CD8-positive, alpha-beta T cell (primary cell): ENCODE measurements at regions of chr1 and their contacts with region 1.

Region 1: DNA sequence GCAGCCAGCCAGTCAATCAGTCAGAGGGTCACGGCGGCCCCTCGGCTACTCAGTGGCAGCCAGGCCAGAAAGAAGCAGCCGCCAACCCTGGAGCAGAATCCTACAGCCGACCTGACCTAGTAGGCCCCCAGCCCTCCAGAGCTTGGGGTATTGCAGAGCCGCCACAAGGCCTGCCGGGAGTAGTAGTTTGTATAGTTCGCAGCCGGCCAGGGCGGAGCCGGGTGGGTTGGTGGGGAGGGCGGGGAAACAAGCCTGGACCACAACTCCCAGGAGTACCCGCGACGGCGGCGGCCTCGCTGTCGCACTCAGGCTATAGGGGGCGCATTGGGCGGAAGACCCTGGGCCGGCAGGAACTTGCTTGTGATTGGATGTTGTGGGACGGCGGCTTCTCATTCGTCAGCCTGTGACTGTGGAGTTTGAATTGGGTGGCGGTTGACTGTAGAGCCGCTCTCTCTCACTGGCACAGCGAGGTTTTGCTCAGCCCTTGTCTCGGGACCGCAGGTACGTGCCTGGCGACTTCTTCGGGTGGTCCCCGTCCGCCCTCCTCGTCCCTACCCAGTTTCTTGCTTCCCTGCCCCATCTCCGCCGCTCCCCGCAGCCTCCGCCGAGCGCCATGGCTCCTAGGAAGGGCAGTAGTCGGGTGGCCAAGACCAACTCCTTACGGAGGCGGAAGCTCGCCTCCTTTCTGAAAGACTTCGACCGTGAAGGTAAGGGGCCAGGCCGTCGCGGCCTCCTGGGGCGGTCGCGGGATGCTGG is at the start of gene CDCA8:
- DNase-seq: peak; percentile 97 to 99 (median 99)
- ATAC-seq: peak; percentile 88
- H3K4me3 ChIP-seq: peak within 1 kb of the TSS; percentile 73 to 90
- H3K4me3 Mint-ChIP-seq: peak within 1 kb of the TSS; percentile 88
- H3K27ac ChIP-seq: peak within 1 kb of the TSS; percentile 54 to 57
- H3K27ac Mint-ChIP-seq: peak within 1 kb of the TSS; percentile 90
- H3K4me1 ChIP-seq: peaks cover 28% of the 10 kb centered on the region
- H3K4me1 Mint-ChIP-seq: peaks cover 39% of the 10 kb centered on the region
- H3K27me3 ChIP-seq: no peaks in the 10 kb centered on the region
- H3K27me3 Mint-ChIP-seq: no peaks in the 10 kb centered on the region
- CTCF ChIP-seq: peak; percentile 42
- total RNA-seq, gene CDCA8: 0.25 to 0.62 TPM

Region 2: DNA sequence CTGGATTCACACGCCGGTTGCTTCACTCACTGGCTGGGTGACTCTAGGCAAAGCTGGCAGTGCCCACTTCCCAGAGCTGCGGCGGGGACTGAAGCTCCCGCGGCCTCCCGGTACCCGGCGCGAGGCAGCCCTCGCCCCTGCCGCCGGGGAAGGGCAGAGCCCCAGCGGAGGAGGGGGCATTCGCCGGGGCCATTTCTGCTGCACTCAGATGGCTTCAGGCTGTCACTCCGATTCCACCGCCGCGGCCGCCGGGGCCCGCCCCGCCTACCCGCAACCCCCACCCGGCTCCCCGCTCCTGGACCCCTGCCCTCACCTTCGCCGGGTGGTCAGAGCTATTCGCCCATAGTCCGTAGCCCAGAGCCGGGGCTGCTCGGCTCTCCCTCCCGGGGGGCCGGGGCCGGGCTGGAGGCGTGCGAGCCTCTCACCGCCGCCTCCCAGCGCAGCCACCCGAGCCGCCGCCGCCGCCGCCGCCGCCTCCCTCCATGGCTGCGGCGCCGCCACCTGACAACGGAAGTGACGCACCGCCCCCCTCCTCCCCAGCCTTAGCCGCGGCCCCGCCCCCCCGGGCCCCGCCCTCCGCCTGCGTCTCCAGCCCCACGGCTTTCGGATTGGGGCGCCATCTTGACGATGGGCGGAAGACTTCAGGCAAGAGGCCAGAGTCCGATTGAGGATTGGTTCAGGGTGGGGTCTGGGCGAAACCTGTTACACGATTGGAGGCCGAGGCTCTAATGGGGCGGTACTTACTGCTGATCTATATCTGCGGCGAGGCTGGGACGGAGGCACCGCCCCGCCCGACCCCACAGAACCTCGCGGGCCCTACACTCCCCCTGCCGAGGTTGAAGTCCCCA is 1306.6 kb before region 1 on chr1 and contains the start of gene STK40:
- CTCF ChIA-PET with region 1: no interaction called
- POLR2A ChIA-PET with region 1: no interaction called
- intact Hi-C with region 1: loop called in 1 of 2 experiments (anchors 5 kb)
- DNase-seq: peak; percentile 97 to 99 (median 98)
- ATAC-seq: peak; percentile 85
- H3K4me3 ChIP-seq: peak within 1 kb of the TSS; percentile 87 to 89
- H3K4me3 Mint-ChIP-seq: peak within 1 kb of the TSS; percentile 88
- H3K27ac ChIP-seq: peak within 1 kb of the TSS; percentile 78 to 92
- H3K27ac Mint-ChIP-seq: peak within 1 kb of the TSS; percentile 98
- H3K4me1 ChIP-seq: peaks cover 27% of the 10 kb centered on the region
- H3K4me1 Mint-ChIP-seq: peaks cover 46% of the 10 kb centered on the region
- H3K27me3 ChIP-seq: no peaks in the 10 kb centered on the region
- H3K27me3 Mint-ChIP-seq: no peaks in the 10 kb centered on the region
- CTCF ChIP-seq: no peak
- total RNA-seq, gene STK40: 13.4 to 16.9 TPM

Region 3: GRCh38 chr1:37514350-37515184 is 177.7 kb before region 1 on chr1 and contains the start of gene MEAF6:
- CTCF ChIA-PET with region 1: no interaction called
- POLR2A ChIA-PET with region 1: interaction called, 14 read pairs
- intact Hi-C with region 1: loop called in 1 of 2 experiments (anchors 1 kb)
- DNase-seq: peak; percentile 68 to 92 (median 83)
- ATAC-seq: peak; percentile 94
- H3K4me3 ChIP-seq: peak within 1 kb of the TSS; percentile 59 to 67
- H3K4me3 Mint-ChIP-seq: peak within 1 kb of the TSS; percentile 97
- H3K27ac ChIP-seq: peak within 1 kb of the TSS; percentile 78 to 79
- H3K27ac Mint-ChIP-seq: peak within 1 kb of the TSS; percentile 97
- H3K4me1 ChIP-seq: peaks cover 30% of the 10 kb centered on the region
- H3K4me1 Mint-ChIP-seq: peaks cover 44% of the 10 kb centered on the region
- H3K27me3 ChIP-seq: no peaks in the 10 kb centered on the region
- H3K27me3 Mint-ChIP-seq: no peaks in the 10 kb centered on the region
- CTCF ChIP-seq: peak; percentile 72
- total RNA-seq, gene MEAF6: 43.4 to 46.0 TPM

Region 4: DNA sequence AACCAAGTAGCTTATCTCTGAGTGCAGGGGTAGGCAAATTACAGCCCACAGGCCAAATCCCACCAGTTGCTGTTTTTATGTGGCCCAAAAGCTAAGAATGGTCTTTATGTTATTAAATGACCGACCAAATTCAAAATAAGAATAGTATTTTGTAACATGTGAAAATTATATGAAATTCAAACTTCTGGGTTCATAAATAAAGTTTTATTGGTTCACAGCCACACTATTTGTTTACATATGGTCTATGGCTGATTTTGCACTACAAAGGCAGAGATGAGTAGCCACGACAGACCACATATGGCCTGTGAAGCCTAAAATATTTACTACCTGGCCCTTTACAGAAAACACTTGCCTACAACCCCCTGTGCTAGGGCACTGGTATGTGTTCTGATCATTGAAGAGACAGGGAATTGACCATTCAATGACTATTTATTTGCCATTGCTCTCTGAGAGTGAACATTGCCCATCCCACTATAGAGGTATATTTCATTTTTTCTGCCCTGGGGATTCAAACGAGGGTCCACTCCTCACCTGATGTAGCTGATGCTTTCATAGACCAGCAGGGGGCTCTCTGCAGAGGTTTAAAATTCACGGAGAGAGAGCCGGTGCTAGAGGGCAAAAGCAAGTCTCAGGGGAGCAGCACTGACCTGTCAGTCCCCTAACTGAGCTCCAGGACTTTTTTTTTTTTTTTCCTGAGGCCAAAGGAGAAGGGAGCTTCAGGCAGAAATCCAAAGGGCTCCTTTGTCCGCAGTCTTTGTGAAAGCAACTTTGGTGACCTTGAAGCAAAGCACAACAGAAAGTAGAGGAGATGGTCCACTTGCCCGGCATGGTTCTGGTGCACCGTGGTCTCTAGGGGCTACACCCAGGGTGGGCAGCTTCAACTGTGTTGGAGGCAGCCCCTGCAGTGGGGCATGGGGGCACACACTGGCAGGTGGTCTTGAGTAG is 89.2 kb before region 1 on chr1:
- CTCF ChIA-PET with region 1: interaction called, 20 read pairs
- POLR2A ChIA-PET with region 1: no interaction called
- intact Hi-C with region 1: no loop called
- DNase-seq: peak in 7 of 9 experiments; percentile 10 to 64 (median 39)
- ATAC-seq: peak; percentile 75
- H3K4me3 ChIP-seq: no peak overlapping the region
- H3K4me3 Mint-ChIP-seq: no peak overlapping the region
- H3K27ac ChIP-seq: no peak overlapping the region
- H3K27ac Mint-ChIP-seq: no peak overlapping the region
- H3K4me1 ChIP-seq: no peaks in the 10 kb centered on the region
- H3K4me1 Mint-ChIP-seq: no peaks in the 10 kb centered on the region
- H3K27me3 ChIP-seq: peaks cover 0 to 2% of the 10 kb centered on the region in 2 experiments
- H3K27me3 Mint-ChIP-seq: peaks cover 7% of the 10 kb centered on the region
- CTCF ChIP-seq: peak; percentile 80

Region 5: DNA sequence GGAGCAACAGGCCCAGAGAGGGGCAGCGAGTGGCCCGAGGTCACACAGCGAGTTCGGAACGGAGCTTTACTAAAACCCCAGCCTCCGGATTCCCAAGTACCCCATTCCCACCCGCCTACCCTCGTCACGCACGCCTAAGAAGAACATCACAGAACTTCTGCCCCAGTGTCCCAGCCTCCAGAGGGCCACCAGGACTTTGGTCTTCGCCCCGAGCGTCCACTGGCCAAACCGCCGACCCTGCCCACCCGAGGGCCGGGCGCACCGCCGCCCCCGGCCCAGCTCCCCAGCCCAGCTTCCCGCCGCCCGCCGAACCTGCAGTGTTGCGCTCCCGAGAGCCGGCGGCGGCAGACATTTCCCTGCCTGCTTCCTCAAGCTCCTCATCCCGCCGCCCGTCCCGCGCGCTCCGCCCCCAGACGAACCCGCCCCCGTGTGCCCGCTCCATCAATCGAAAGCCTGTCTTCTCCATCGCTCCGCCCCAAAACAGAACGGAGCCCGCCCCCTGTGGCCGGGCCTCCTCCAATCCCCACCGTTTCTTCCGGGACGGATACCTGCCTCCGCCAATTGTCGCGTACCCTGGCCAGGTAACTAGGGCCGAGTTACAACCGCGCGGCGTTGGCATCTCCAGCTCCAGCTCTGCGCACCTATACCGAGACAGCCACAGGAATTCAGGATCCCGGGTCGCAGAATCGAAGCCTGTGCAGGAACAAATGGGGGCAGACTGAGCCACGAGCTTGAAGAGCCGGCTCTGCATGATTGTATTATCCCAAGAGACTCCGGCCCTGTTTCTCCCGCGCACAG is 239.3 kb after region 1 on chr1:
- CTCF ChIA-PET with region 1: no interaction called
- POLR2A ChIA-PET with region 1: interaction called, 3 read pairs
- intact Hi-C with region 1: loop called (anchors 2 to 5 kb)
- DNase-seq: peak; percentile 96 to 98 (median 97)
- ATAC-seq: peak; percentile 98
- H3K4me3 ChIP-seq: peak overlapping the region; percentile 79 to 89
- H3K4me3 Mint-ChIP-seq: peak overlapping the region; percentile 100
- H3K27ac ChIP-seq: peak overlapping the region; percentile 40 to 66
- H3K27ac Mint-ChIP-seq: peak overlapping the region; percentile 89
- H3K4me1 ChIP-seq: peaks cover 26% of the 10 kb centered on the region
- H3K4me1 Mint-ChIP-seq: peaks cover 40% of the 10 kb centered on the region
- H3K27me3 ChIP-seq: no peaks in the 10 kb centered on the region
- H3K27me3 Mint-ChIP-seq: no peaks in the 10 kb centered on the region
- CTCF ChIP-seq: no peak

Region 6: DNA sequence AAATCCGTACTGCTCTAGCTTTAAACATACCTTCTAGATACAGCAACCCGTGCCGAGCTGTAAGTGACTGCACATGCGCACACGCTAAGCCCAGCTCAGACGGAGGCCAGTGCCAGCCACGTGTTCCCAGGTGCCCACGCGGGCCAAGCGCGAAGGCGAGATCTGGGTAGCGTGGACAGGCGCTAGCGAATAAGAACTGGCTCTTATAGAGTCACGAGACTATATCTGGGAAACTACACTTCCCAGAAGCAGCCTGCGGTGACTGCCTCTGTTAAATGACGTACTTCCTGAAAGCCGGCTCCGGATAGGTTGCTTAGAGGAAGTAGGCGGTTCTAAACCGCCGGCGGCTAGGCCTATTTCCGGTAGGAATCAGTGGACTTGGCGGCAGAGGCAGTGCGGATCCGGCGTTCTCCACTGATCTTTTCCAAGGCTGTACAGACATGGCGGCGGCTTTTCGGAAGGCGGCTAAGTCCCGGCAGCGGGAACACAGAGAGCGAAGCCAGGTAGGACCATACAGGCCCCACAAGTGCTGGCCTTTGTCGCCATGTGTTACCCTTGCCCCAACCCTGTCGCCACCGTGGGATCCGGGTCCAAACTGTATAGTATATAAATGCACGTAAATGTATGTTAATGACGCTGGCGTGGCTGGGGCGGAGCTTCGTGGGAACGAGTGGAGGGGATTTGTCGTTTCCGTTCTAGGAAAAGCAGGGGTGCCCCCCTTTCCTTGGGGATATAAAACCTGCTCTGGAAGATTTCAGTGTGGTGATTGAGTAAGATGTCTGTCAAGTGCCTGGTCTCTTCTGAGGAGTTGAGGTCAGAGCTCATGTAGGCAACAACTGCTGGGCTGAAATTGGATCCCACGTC is 320.3 kb after region 1 on chr1 and contains the start of gene UTP11:
- CTCF ChIA-PET with region 1: no interaction called
- POLR2A ChIA-PET with region 1: no interaction called
- intact Hi-C with region 1: loop called (anchors 1 kb)
- DNase-seq: peak; percentile 80 to 97 (median 88)
- ATAC-seq: peak; percentile 86
- H3K4me3 ChIP-seq: peak within 1 kb of the TSS; percentile 66 to 94
- H3K4me3 Mint-ChIP-seq: peak within 1 kb of the TSS; percentile 99
- H3K27ac ChIP-seq: peak within 1 kb of the TSS; percentile 74 to 94
- H3K27ac Mint-ChIP-seq: peak within 1 kb of the TSS; percentile 99
- H3K4me1 ChIP-seq: peaks cover 40% of the 10 kb centered on the region
- H3K4me1 Mint-ChIP-seq: peaks cover 57% of the 10 kb centered on the region
- H3K27me3 ChIP-seq: no peaks in the 10 kb centered on the region
- H3K27me3 Mint-ChIP-seq: no peaks in the 10 kb centered on the region
- CTCF ChIP-seq: no peak
- total RNA-seq, gene UTP11: 12.8 to 14.0 TPM